Breast epithelium (tissue), 4 donors: ENCODE measurements at regions of chr17 and their contacts with region 1.

Region 1: GRCh38 chr17:34902831-34903547 is 58.3 kb downstream of the CCT6B start:
- DNase-seq: no peak
- H3K4me3 ChIP-seq: no peak overlapping the region
- H3K27ac ChIP-seq: no peak overlapping the region
- H3K4me1 ChIP-seq: no peaks in the 10 kb centered on the region
- H3K27me3 ChIP-seq: peaks cover 0 to 1% of the 10 kb centered on the region in 2 donors
- CTCF ChIP-seq: no peak
- POLR2A ChIP-seq: no peak

Region 2: DNA sequence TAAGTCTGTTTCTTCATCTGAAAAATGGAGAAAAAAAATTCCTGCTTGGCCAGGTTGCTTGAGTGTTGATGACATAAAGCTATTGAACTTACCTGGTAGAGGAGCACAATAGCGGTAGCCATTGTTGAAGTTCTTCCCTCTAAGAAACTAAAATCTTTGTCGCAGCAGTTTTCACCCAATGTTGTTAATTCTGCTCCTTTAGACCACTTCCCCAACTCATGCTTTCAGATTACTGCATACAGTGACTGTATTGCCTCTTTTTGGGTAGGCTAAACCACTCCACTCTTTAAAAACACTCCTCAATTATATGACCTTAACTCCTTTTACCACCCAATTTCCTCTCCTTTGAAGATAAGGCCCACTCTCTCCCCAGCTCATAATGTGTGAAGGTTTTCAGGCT is 683.6 kb before region 1 on chr17:
- intact Hi-C with region 1: loop called (anchors 5 kb)
- DNase-seq: no peak
- H3K4me3 ChIP-seq: no peak overlapping the region
- H3K27ac ChIP-seq: no peak overlapping the region
- H3K4me1 ChIP-seq: no peaks in the 10 kb centered on the region
- H3K27me3 ChIP-seq: no peaks in the 10 kb centered on the region
- CTCF ChIP-seq: no peak
- POLR2A ChIP-seq: no peak

Region 3: DNA sequence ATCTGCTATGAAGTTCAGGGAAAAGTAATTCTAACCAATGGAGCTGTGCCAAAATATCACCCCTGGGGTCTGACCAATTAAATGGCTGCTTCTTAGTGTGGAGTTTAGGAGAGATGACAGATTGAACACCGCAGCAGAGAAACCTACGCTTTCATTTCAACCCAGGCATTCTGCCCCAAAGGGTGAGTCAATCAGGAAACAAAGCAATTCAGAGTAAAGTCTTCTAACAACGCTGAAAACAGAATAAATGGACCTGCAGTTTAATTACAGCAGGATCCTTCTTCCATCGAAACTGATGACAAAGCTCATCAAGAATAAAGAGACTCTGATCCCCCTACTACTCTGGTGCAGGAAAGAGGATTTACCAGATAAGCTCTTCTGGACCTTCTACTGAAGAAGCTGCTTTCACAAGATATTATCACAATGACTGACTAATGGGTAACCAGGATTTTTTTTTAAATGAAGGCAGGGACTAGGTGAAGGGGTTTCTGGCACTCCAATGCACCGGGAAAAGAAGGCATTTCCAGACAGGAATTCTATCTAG is 143.8 kb after region 1 on chr17:
- intact Hi-C with region 1: no loop called
- DNase-seq: no peak
- H3K4me3 ChIP-seq: no peak overlapping the region
- H3K27ac ChIP-seq: peak overlapping the region in 1 of 2 donors; percentile 48
- H3K4me1 ChIP-seq: peaks cover 0 to 11% of the 10 kb centered on the region in 2 donors
- H3K27me3 ChIP-seq: no peaks in the 10 kb centered on the region
- CTCF ChIP-seq: no peak
- POLR2A ChIP-seq: no peak

Region 4: DNA sequence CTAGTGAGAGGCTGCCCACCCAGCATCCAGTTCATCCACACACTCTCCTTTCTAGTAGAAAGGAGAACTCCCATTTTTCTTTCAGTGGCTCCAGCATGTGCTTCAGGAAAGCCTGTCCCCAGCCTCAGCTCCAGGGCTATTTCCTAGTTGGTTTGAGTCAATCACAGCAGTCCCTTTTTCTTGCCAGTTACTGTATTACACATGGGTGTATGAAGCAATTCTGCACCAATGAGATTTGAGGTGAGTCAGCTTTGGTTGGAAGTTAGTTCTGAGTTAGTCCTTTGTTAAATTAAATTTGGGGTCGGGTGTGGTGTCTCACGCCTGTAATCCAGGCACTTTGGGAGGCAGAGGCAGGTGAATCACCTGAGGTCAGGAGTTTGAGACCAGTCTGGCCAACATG is 191.9 kb after region 1 on chr17:
- intact Hi-C with region 1: no loop called
- DNase-seq: no peak
- H3K4me3 ChIP-seq: no peak overlapping the region
- H3K27ac ChIP-seq: no peak overlapping the region
- H3K4me1 ChIP-seq: no peaks in the 10 kb centered on the region
- H3K27me3 ChIP-seq: no peaks in the 10 kb centered on the region
- CTCF ChIP-seq: no peak
- POLR2A ChIP-seq: no peak